PC-9 (cell line): ENCODE measurements at regions of chr7 and their contacts with region 1.

Region 1: GRCh38 chr7:92447345-92448204 is at the start of gene GATAD1:
- DNase-seq: peak; percentile 81 to 92
- H3K4me3 ChIP-seq: peak within 1 kb of the TSS; percentile 60
- H3K27ac ChIP-seq: peak within 1 kb of the TSS; percentile 55
- H3K4me1 ChIP-seq: peaks cover 9% of the 10 kb centered on the region
- H3K27me3 ChIP-seq: no peaks in the 10 kb centered on the region
- CTCF ChIP-seq: peak; percentile 86; the same call in 1 of the 2 replicates
- total RNA-seq, gene GATAD1: 39.4 and 41.7 TPM in 2 replicates

Region 2: DNA sequence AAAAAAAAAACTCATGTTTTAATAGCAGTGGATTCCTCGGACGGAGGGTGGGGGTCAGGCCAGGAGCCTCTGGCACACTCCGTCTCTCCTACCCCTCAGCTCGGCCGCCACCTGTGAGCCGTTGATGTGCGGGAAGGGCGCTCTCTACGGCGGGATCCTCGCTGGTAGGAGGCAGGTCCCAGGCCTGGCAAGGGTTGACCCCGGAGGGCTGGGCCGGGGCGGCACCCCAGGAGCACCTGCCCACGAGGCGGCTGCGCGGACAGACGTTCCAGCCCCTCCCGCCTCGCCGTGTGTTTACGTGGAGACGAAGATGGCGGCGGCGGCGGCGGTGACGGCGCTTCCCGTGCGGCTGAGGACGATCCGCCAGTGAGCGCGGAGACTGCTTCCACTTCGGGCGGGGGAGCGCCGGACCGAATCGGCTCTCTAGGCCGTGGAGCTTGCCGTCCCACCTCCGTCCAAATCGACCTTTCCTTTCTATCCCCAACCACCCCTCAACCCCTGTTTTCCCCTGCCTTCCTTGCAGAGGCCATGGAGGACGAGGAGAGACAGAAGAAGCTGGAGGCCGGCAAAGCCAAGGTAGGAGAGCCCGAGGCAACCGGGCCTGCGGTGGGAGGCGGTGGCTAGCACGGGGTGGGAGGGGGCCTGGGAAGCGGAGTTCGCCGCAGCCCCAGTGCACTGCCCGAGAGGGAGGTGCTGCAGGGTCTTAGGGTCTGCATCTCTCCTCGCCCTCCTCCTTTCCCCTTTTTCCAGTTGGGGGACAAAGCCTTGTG is 506.8 kb before region 1 on chr7 and contains the start of gene AKAP9:
- CTCF ChIA-PET with region 1: no interaction called
- POLR2A ChIA-PET with region 1: no interaction called
- intact Hi-C with region 1: loop called (anchors 2 kb)
- DNase-seq: peak; percentile 81 to 94
- H3K4me3 ChIP-seq: peak within 1 kb of the TSS; percentile 70
- H3K27ac ChIP-seq: peak within 1 kb of the TSS; percentile 78
- H3K4me1 ChIP-seq: peaks cover 30% of the 10 kb centered on the region
- H3K27me3 ChIP-seq: no peaks in the 10 kb centered on the region
- CTCF ChIP-seq: no peak
- total RNA-seq, gene AKAP9: 48.0 and 71.3 TPM in 2 replicates

Region 3: DNA sequence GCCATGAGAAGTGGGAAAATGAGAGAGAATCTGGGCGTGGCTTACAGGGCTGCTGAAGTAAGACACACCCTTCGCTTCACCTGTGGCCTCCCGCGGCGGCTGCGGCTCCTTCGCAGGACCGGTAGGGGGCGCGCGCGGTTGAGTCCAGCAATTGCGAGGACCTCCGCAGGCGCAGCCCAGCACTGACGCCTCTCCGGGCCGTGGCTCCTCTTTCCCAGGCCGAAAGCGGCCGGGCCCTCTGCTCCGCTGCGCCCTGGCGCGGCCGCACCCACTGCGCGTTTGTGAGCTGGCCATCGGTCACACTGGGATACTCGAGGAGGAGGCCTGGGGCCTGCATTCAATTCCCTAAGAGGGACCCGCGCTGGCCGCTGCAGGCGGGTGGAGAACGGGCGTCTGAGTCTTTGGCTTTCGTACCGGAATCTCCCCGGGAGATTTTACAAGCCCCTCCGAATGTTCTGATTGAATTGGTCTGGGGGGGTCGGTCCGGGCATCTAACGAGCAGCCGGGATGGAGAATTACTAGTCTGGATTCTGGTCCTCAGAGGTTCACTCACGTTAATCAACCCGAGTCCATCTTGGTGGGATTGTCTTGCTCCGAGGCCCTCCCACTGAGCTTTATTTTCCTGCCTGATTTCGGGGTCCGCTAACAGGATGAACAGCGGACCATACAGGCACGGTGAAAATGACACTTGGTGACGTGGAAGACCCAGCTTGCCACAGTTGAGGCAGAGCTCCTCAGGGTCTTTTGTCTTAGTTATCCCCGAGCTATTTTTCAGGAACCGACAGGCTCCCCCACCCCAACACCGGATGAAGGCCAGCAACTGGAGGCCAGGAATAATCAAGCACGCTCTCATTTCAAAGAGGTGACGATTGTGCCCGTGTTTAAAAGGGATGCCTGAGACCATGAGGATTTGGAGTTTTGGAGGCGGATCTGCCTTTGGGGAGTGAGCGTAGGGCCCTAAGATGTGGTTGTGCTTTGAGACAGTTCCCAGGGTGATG is 268.3 kb before region 1 on chr7 and contains the start of gene LRRD1:
- CTCF ChIA-PET with region 1: interaction called, 3 read pairs
- POLR2A ChIA-PET with region 1: no interaction called
- intact Hi-C with region 1: loop called (anchors 2 kb)
- DNase-seq: peak; percentile 60 to 96
- H3K4me3 ChIP-seq: 0 out of 2 replicates have a peak within 1 kb of the TSS, but pooled peaks have one; percentile 24
- H3K27ac ChIP-seq: no peak within 1 kb of the TSS
- H3K4me1 ChIP-seq: 0 out of 2 replicates have a peak, but pooled peaks cover 9% of the 10 kb centered on the region
- H3K27me3 ChIP-seq: no peaks in the 10 kb centered on the region
- CTCF ChIP-seq: peak; percentile 72
- total RNA-seq, gene LRRD1: not detected in 2 replicates

Region 4: GRCh38 chr7:92282930-92283329 is 164.6 kb before region 1 on chr7:
- CTCF ChIA-PET with region 1: no interaction called
- POLR2A ChIA-PET with region 1: no interaction called
- intact Hi-C with region 1: no loop called
- DNase-seq: no peak
- H3K4me3 ChIP-seq: no peak overlapping the region
- H3K27ac ChIP-seq: no peak overlapping the region
- H3K4me1 ChIP-seq: no peaks in the 10 kb centered on the region
- H3K27me3 ChIP-seq: no peaks in the 10 kb centered on the region
- CTCF ChIP-seq: no peak

Region 5: DNA sequence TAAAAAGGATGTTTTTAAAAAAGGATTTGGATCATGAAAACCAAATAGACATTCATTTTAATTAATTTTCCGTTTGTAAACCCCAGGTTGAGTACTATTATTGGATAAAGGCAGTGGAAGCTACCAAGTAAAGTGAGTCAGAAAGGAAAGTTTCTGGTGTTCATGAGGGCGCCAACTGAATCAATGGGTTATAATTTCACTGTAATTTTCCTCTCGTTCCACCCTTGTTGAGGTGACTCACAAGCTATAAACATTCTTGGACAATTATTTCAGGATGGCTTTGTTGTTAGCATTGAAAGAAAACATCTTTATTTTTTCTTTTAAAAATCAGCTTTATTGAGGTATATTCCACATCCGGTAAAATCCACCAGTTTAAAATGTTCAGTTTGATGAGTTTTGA is 147.7 kb after region 1 on chr7:
- CTCF ChIA-PET with region 1: no interaction called
- POLR2A ChIA-PET with region 1: interaction called, 38 read pairs
- intact Hi-C with region 1: no loop called
- DNase-seq: peak in 1 of 2 experiments; percentile 65
- H3K4me3 ChIP-seq: no peak overlapping the region
- H3K27ac ChIP-seq: no peak overlapping the region
- H3K4me1 ChIP-seq: peaks cover 4% of the 10 kb centered on the region; the same call in 1 of the 2 replicates
- H3K27me3 ChIP-seq: no peaks in the 10 kb centered on the region
- CTCF ChIP-seq: no peak